Endothelial cell of umbilical vein (primary cell): ENCODE measurements at regions of chr4 and their contacts with region 1.

Region 1: GRCh38 chr4:101527188-101527587 is 179.9 kb upstream of the PPP3CA start:
- DNase-seq: no peak
- H3K4me3 ChIP-seq: no peak overlapping the region
- H3K27ac ChIP-seq: no peak overlapping the region
- H3K4me1 ChIP-seq: no peaks in the 10 kb centered on the region
- H3K27me3 ChIP-seq: peaks cover 0 to 4% of the 10 kb centered on the region in 2 experiments
- CTCF ChIP-seq: no peak
- POLR2A ChIP-seq: no peak

Region 2: GRCh38 chr4:101393250-101393649 is 133.9 kb before region 1 on chr4:
- CTCF ChIA-PET with region 1: no interaction called
- POLR2A ChIA-PET with region 1: no interaction called
- dilution Hi-C with region 1: no loop called
- intact Hi-C with region 1: no loop called
- DNase-seq: no peak
- H3K4me3 ChIP-seq: no peak overlapping the region
- H3K27ac ChIP-seq: no peak overlapping the region
- H3K4me1 ChIP-seq: no peaks in the 10 kb centered on the region
- H3K27me3 ChIP-seq: no peaks in the 10 kb centered on the region
- CTCF ChIP-seq: no peak
- POLR2A ChIP-seq: no peak

Region 3: DNA sequence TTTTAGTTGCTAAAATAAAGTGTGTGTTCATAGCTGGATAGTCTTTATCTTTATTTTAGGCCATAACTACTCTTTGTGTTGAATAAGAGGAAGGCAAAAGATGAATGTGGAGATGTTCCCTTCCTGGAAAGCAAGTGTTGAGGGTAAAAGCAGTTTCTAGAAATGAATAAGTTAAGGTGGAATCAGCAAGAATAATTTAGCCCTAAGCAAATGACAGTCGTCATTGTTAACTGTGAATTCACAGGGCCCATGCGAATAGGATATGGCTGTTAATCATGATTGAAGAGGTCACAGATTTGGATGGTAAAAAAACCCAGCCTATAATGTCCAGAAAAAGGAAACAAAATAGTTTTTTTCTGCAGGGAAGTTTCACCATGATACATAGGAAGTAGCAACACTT is 12.1 kb before region 1 on chr4:
- CTCF ChIA-PET with region 1: interaction called, 12 read pairs
- POLR2A ChIA-PET with region 1: no interaction called
- dilution Hi-C with region 1: no loop called
- intact Hi-C with region 1: no loop called
- DNase-seq: no peak
- H3K4me3 ChIP-seq: no peak overlapping the region
- H3K27ac ChIP-seq: no peak overlapping the region
- H3K4me1 ChIP-seq: no peaks in the 10 kb centered on the region
- H3K27me3 ChIP-seq: peaks cover 0 to 6% of the 10 kb centered on the region in 2 experiments
- CTCF ChIP-seq: no peak
- POLR2A ChIP-seq: no peak